Tibial artery (tissue), 4 donors: ENCODE measurements at regions of chr18 and their contacts with region 1.

Region 1: GRCh38 chr18:11149441-11150270 is at the start of gene PIEZO2:
- DNase-seq: peak; percentile 38 to 73
- H3K4me3 ChIP-seq: peak within 1 kb of the TSS; percentile 50 to 60
- H3K27ac ChIP-seq: no peak within 1 kb of the TSS
- H3K4me1 ChIP-seq: peaks cover 0 to 21% (median 20%) of the 10 kb centered on the region in 4 donors
- H3K27me3 ChIP-seq: peaks cover 0 to 36% of the 10 kb centered on the region in 2 donors
- CTCF ChIP-seq: no peak

Region 2: GRCh38 chr18:10851824-10852319 is 297.8 kb before region 1 on chr18:
- intact Hi-C with region 1: loop called (anchors 10 kb)
- DNase-seq: no peak
- H3K4me3 ChIP-seq: no peak overlapping the region
- H3K27ac ChIP-seq: no peak overlapping the region
- H3K4me1 ChIP-seq: no peaks in the 10 kb centered on the region
- H3K27me3 ChIP-seq: no peaks in the 10 kb centered on the region
- CTCF ChIP-seq: peak; percentile 80 to 84

Region 3: GRCh38 chr18:11215216-11215615 is 65.6 kb after region 1 on chr18:
- intact Hi-C with region 1: loop called (anchors 10 kb)
- DNase-seq: no peak
- H3K4me3 ChIP-seq: no peak overlapping the region
- H3K27ac ChIP-seq: no peak overlapping the region
- H3K4me1 ChIP-seq: no peaks in the 10 kb centered on the region
- H3K27me3 ChIP-seq: no peaks in the 10 kb centered on the region
- CTCF ChIP-seq: no peak

Region 4: GRCh38 chr18:11883153-11883552 is 733.5 kb after region 1 on chr18:
- intact Hi-C with region 1: no loop called
- DNase-seq: peak in 1 of 2 donors; percentile 4
- H3K4me3 ChIP-seq: no peak overlapping the region
- H3K27ac ChIP-seq: no peak overlapping the region
- H3K4me1 ChIP-seq: no peaks in the 10 kb centered on the region
- H3K27me3 ChIP-seq: no peaks in the 10 kb centered on the region
- CTCF ChIP-seq: no peak